Heart right ventricle (tissue), 16 donors: ENCODE measurements at regions of chr14 and their contacts with region 1.

Region 1: GRCh38 chr14:22715186-22715812 is 51.2 kb upstream of the OXA1L start:
- DNase-seq: no peak
- ATAC-seq: no peak
- H3K4me3 ChIP-seq: no peak overlapping the region
- H3K27ac ChIP-seq: no peak overlapping the region
- H3K4me1 ChIP-seq: peaks cover 0 to 10% (median 0%) of the 10 kb centered on the region in 9 donors
- H3K27me3 ChIP-seq: peaks cover 0 to 32% (median 14%) of the 10 kb centered on the region in 7 donors
- CTCF ChIP-seq: no peak

Region 2: DNA sequence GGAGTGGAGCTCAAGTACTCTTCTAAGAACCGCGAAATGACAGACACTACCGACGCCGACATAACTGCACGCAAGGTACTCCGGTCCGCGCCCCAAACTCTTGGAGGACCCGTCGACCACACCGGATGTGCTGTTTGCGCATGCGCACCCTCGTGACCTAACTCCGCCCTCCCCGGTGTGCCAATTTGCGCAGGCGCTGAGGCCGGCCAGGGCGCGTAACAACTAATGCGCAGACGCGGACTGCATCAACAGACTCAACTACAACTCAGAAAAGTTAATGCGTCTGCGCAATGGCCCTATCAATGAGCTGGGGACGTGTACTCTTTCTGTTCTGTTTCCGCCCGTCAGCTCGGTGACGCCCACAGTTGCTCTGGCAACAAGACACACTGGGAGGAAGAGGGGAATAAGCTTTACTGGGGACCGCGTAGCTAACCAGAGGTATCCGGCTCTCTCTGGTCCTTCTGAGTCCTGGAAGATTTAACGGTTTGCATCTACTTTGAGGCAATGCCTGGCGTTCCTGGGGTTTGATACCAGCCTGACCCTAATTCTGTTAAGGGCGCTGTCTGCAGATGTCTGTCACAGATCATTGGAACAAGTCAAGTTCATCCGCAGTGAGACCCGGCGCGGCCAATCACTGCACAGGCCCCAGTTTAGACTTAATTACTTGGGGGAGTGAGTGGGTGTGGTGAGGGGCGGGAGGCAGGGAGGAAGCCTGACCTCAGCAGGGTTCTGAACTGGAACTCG is 126.0 kb before region 1 on chr14 and contains the start of gene DAD1:
- intact Hi-C with region 1: loop called in 1 of 10 experiments (anchors 10 kb)
- DNase-seq: peak; percentile 99
- ATAC-seq: peak; percentile 98 to 99 (median 99)
- H3K4me3 ChIP-seq: peak within 1 kb of the TSS; percentile 48 to 94 (median 73)
- H3K27ac ChIP-seq: peak within 1 kb of the TSS; percentile 76 to 96 (median 90)
- H3K4me1 ChIP-seq: peaks cover 3 to 55% (median 47%) of the 10 kb centered on the region in 9 donors
- H3K27me3 ChIP-seq: no peaks in the 10 kb centered on the region
- CTCF ChIP-seq: no peak
- total RNA-seq, gene DAD1: 115 to 182 (median 136) TPM

Region 3: DNA sequence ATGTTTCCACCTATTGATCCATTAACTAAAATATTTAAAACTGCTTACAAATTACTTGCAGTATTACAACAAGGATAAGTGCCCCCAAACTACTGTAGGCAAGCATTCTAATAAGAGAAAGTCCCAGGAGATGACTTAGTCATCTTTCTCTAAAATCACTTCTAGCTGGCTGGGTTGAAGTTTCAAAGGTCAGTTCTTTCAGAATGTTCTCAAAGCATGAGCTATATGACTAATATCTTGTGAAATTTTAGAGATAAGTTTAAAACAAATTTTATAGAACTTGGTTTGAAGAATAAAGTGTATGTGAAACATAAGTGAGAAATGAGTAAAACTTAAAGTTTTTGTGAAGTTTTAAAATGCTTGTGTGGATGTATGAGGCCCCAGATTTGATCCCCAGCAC is 46.9 kb before region 1 on chr14:
- intact Hi-C with region 1: loop called in 2 of 10 experiments (anchors 5 to 10 kb)
- DNase-seq: no peak
- ATAC-seq: no peak
- H3K4me3 ChIP-seq: no peak overlapping the region
- H3K27ac ChIP-seq: peak overlapping the region in 2 of 10 donors; percentile 46 to 50
- H3K4me1 ChIP-seq: peaks cover 0 to 8% (median 0%) of the 10 kb centered on the region in 9 donors
- H3K27me3 ChIP-seq: no peaks in the 10 kb centered on the region
- CTCF ChIP-seq: no peak

Region 4: DNA sequence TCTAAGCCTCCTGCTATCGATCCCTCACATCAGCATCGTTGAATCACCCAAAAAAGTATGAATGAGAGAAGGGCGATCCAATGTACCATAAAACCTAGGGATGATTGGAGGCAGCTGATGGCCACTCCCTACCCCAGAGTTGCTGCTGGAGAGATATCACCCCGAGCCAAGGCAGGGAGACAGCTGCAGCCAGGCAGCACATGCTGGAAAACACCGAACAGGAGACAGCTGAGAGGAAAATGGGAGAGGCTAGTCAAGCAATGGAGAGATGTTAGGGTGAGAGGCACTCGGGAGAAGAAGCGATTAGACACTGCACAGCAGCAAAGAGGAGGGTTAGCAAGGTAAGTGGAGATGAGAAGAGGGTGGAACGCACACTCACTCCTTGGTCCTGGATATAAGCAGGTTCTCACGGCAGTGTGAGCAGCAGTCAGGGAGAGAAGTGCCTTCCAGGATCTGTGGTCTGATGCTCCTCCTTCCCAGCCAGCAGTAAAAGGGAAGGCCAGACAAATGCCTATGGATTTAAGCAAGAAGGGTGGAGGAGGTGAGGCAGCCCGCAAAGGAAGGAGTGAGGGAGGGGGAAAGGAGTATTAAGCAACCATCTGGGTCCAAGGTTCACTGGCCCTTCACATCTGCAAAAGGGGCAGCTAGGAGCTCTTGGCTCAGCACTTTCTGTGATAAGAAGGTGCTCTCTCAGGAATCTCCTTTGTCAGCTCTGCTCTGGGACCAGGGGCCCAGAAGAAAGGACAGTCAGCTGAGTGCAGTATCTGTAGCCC is 99.8 kb after region 1 on chr14 and contains the start of gene SLC7A7:
- intact Hi-C with region 1: no loop called
- DNase-seq: no peak
- ATAC-seq: peak in 3 of 8 donors; percentile 7 to 42 (median 16)
- H3K4me3 ChIP-seq: peak within 1 kb of the TSS in 5 of 10 donors; percentile 3 to 51 (median 24)
- H3K27ac ChIP-seq: peak within 1 kb of the TSS in 5 of 10 donors; percentile 15 to 81 (median 37)
- H3K4me1 ChIP-seq: peaks cover 0 to 57% (median 17%) of the 10 kb centered on the region in 9 donors
- H3K27me3 ChIP-seq: no peaks in the 10 kb centered on the region
- CTCF ChIP-seq: no peak
- total RNA-seq, gene SLC7A7: 1.1 to 16.1 (median 2.8) TPM